IMR-90 (cell line): ENCODE measurements at regions of chr5 and their contacts with region 1.

Region 1: GRCh38 chr5:82204567-82204966 is 73.6 kb downstream of the RPS23 start:
- DNase-seq: no peak
- ATAC-seq: no peak
- H3K4me3 ChIP-seq: no peak overlapping the region
- H3K27ac ChIP-seq: no peak overlapping the region
- H3K4me1 ChIP-seq: no peaks in the 10 kb centered on the region
- H3K27me3 ChIP-seq: no peaks in the 10 kb centered on the region
- CTCF ChIP-seq: no peak
- POLR2A ChIP-seq: no peak
- RAD21 ChIP-seq: no peak

Region 2: GRCh38 chr5:82165740-82166530 is 38.6 kb before region 1 on chr5:
- CTCF ChIA-PET with region 1: no interaction called
- POLR2A ChIA-PET with region 1: no interaction called
- dilution Hi-C with region 1: no loop called
- in situ Hi-C with region 1: no loop called
- intact Hi-C with region 1: no loop called
- DNase-seq: peak; percentile 95
- ATAC-seq: peak; percentile 79
- H3K4me3 ChIP-seq: no peak overlapping the region
- H3K27ac ChIP-seq: no peak overlapping the region
- H3K4me1 ChIP-seq: peaks cover 5% of the 10 kb centered on the region
- H3K27me3 ChIP-seq: no peaks in the 10 kb centered on the region
- CTCF ChIP-seq: peak; percentile 94
- POLR2A ChIP-seq: peak; percentile 36; the same call in 1 of the 2 replicates
- RAD21 ChIP-seq: peak; percentile 94

Region 3: GRCh38 chr5:82244854-82245635 is 40.5 kb after region 1 on chr5:
- CTCF ChIA-PET with region 1: no interaction called
- POLR2A ChIA-PET with region 1: no interaction called
- dilution Hi-C with region 1: no loop called
- in situ Hi-C with region 1: no loop called
- intact Hi-C with region 1: no loop called
- DNase-seq: no peak
- ATAC-seq: no peak; the same call in 1 of the 2 replicates
- H3K4me3 ChIP-seq: no peak overlapping the region
- H3K27ac ChIP-seq: no peak overlapping the region
- H3K4me1 ChIP-seq: no peaks in the 10 kb centered on the region
- H3K27me3 ChIP-seq: no peaks in the 10 kb centered on the region
- CTCF ChIP-seq: no peak
- POLR2A ChIP-seq: no peak
- RAD21 ChIP-seq: 0 out of 2 replicates have a peak, but pooled peaks have one; percentile 14

Region 4: DNA sequence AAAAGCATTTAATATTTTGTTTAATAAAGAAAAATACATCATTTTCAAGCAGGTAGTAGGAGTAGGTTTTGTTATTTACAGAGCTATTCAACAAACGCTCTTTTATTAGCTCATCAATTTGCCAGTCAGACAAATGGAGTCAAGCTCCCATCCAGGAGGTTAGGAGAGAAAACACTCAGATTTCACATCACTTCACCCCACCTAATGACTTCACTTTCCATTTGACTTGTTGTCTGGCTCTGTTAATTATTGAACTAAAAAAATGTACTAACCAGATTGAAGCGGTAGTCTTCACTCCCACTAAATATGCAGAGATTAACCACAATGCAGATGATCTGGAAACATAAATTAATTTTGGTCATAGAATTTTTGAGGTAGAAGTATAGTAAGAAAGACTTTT is 1073.4 kb after region 1 on chr5:
- CTCF ChIA-PET with region 1: no interaction called
- POLR2A ChIA-PET with region 1: no interaction called
- dilution Hi-C with region 1: no loop called
- in situ Hi-C with region 1: no loop called
- intact Hi-C with region 1: loop called (anchors 5 kb)
- DNase-seq: no peak
- ATAC-seq: no peak
- H3K4me3 ChIP-seq: no peak overlapping the region
- H3K27ac ChIP-seq: no peak overlapping the region
- H3K4me1 ChIP-seq: no peaks in the 10 kb centered on the region; the same call in 1 of the 2 replicates
- H3K27me3 ChIP-seq: no peaks in the 10 kb centered on the region
- CTCF ChIP-seq: no peak
- POLR2A ChIP-seq: no peak
- RAD21 ChIP-seq: no peak